H1 (cell line): ENCODE measurements at regions of chr1 and their contacts with region 1.

Region 1: DNA sequence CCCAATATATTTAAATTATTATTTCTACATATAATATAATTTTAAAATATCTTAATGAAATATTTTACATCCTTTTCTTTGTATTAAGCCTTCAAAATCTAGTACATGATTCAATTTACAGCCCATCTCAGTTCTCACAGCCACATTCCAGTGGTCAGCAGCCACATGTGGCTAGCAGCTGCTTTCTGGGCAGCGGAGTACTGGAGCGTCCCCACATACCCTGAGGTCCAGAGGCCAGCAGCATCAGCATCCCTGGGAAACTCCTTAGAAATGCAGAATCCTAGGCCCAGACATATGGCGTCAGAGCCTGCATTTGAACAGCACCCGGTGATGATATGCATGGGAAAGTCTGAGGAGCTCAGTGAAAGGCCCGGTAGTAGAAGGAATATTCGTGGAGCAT is 8.6 kb upstream of the LHX4 start:
- DNase-seq: no peak
- H3K4me3 ChIP-seq: no peak overlapping the region
- H3K27ac ChIP-seq: no peak overlapping the region
- H3K4me1 ChIP-seq: no peaks in the 10 kb centered on the region
- H3K27me3 ChIP-seq: peaks cover 0 to 6% (median 4%) of the 10 kb centered on the region in 4 experiments; a peak in 4 of 7 replicates
- CTCF ChIP-seq: no peak
- EP300 ChIP-seq: no peak
- POLR2A ChIP-seq: no peak
- RAD21 ChIP-seq: no peak

Region 2: DNA sequence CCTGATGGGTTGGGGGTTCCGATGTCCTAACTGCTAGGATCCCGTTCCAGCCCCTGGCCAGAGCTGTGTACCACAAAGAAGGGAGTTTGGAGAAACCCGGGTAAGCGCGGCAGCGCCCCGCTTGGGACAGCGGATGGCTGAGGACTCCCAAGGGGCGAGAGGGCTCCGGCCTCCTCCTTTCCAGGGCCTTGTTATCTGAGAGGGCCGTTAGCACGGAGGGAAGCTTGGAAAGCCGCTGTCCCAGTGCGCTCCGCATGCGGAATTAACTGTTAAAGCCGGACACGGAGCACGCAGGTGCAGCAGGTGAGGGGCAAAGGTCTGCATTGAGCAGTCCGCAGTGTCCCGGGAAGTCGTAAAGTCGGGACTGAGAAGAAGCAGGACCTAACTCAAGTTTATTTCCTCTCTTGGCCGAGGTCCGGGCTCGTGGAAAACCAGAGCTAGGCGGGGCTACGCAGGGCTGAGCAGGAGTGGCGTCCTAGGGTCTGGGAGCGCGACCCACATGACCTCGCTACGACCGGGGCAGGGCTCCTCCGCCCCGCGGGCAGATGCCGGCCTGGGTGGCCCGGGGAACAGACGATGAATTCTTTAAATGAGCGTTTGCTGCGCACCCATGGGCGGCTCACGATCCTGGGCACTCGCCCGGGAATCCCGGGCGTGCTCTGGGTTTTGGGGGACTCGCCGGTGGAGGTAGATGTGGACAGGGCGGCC is 13.1 kb after region 1 on chr1:
- CTCF ChIA-PET with region 1: interaction called, 15 read pairs
- POLR2A ChIA-PET with region 1: interaction called, 26 read pairs
- DNase-seq: peak in 1 of 2 experiments; percentile 84
- H3K4me3 ChIP-seq: peak overlapping the region; percentile 31 to 66 (median 50); a peak in 7 of 8 replicates
- H3K27ac ChIP-seq: no peak overlapping the region
- H3K4me1 ChIP-seq: peaks cover 26 to 53% (median 36%) of the 10 kb centered on the region in 4 experiments
- H3K27me3 ChIP-seq: peaks cover 40 to 75% (median 68%) of the 10 kb centered on the region in 4 experiments
- CTCF ChIP-seq: no peak; a peak in 1 of 4 replicates
- EP300 ChIP-seq: no peak
- POLR2A ChIP-seq: no peak
- RAD21 ChIP-seq: no peak